HCT116 (cell line): ENCODE measurements at regions of chr1 and their contacts with region 1.

Region 1: DNA sequence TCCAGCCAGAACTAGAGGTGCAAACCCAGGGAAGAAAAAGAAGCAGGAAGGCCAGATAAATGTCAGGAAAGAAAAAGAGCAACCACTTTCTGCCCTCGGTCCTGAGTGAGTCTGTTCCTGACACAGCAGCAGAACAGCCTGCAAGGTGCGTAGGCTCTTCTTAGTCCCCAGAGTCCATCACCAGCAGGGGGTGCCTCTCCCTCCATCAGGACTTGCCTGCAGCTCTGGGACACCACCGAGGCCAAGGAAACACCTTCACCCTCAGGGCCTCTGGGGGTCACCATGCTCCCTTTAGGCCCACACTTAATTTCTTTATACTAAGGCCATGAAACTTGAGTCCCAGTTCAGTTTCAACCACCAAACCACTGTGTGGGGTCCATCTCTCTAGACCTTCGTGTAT is 43.7 kb upstream of the NFASC start:
- DNase-seq: no peak
- ATAC-seq: peak; percentile 75
- H3K4me3 ChIP-seq: no peak overlapping the region
- H3K27ac ChIP-seq: no peak overlapping the region
- H3K4me1 ChIP-seq: peaks cover 2 to 3% of the 10 kb centered on the region in 2 experiments; a peak in 2 of 4 replicates
- H3K27me3 ChIP-seq: peaks cover 18% of the 10 kb centered on the region
- CTCF ChIP-seq: peak; percentile 53 to 66 (median 58)
- POLR2A ChIP-seq: no peak
- RAD21 ChIP-seq: peak; percentile 54

Region 2: DNA sequence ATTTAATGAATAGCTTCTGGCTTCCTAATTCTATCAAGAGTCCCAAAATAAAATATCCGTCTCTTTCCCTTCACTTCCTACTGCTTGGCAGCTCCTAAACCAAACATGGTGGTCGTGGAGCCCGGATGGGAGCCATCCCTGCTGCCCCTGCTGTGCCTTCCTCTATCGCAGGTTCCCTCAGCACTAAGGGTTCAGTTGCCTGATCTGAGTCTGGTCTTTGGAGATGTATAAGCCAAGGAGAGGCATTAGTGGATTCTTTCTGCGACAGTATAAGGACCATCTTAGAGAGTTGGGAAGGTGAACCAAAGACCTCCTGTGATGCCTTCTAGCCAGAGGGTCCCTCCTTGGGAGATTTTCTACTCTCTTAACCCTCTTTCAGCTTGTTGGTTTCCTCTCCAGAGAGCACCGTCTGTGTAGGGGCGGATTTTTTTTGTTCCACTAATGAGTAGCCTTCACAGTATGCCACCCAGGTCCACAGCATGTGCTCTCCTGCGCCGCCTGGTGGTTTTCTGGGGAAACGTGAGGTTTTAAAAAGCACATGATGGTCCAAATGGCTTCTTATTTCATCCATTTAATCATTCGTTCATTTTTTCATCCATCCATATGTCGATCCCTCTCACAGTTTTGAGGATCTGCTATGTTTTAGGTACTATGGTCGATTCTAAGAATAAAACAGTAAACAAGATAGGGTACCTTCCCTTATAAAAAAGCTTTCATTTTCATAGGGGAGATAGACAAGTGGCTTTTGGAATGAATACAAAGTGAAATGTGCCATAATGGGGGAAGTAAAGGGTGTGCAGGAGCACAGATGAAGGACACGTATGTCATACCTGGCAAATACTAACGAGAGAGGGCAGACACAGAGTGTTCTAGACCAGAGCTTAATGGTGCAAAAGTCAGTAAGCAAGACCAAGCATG is 114.7 kb after region 1 on chr1:
- CTCF ChIA-PET with region 1: interaction called, 5 read pairs
- POLR2A ChIA-PET with region 1: no interaction called
- RAD21 ChIA-PET with region 1: no interaction called
- intact Hi-C with region 1: loop called (anchors 1 kb)
- DNase-seq: peak; percentile 34
- ATAC-seq: peak; percentile 93
- H3K4me3 ChIP-seq: no peak overlapping the region
- H3K27ac ChIP-seq: no peak overlapping the region
- H3K4me1 ChIP-seq: no peaks in the 10 kb centered on the region
- H3K27me3 ChIP-seq: peaks cover 18% of the 10 kb centered on the region; the same call in 1 of the 2 replicates
- CTCF ChIP-seq: peak; percentile 87 to 95 (median 95)
- POLR2A ChIP-seq: no peak
- RAD21 ChIP-seq: peak; percentile 76